ENCODE measurements at regions of chr11 and their contacts with region 1.

Region 1: GRCh38 chr11:47980245-47981049 is at the start of gene PTPRJ:
- DNase-seq: peak in 1 of 2 donors; percentile 43
- ATAC-seq: peak; percentile 67 to 72
- H3K4me3 ChIP-seq: peak within 1 kb of the TSS; percentile 67 to 93 (median 72)
- H3K27ac ChIP-seq: peak within 1 kb of the TSS; percentile 69 to 74 (median 72)
- H3K4me1 ChIP-seq: peaks cover 8 to 12% of the 10 kb centered on the region in 2 donors
- H3K27me3 ChIP-seq: peaks cover 0 to 3% (median 0%) of the 10 kb centered on the region in 3 donors
- CTCF ChIP-seq: no peak
- POLR2A ChIP-seq: peak; percentile 28 to 69
- total RNA-seq, gene PTPRJ: 5.4 to 9.0 (median 5.6) TPM

Region 2: DNA sequence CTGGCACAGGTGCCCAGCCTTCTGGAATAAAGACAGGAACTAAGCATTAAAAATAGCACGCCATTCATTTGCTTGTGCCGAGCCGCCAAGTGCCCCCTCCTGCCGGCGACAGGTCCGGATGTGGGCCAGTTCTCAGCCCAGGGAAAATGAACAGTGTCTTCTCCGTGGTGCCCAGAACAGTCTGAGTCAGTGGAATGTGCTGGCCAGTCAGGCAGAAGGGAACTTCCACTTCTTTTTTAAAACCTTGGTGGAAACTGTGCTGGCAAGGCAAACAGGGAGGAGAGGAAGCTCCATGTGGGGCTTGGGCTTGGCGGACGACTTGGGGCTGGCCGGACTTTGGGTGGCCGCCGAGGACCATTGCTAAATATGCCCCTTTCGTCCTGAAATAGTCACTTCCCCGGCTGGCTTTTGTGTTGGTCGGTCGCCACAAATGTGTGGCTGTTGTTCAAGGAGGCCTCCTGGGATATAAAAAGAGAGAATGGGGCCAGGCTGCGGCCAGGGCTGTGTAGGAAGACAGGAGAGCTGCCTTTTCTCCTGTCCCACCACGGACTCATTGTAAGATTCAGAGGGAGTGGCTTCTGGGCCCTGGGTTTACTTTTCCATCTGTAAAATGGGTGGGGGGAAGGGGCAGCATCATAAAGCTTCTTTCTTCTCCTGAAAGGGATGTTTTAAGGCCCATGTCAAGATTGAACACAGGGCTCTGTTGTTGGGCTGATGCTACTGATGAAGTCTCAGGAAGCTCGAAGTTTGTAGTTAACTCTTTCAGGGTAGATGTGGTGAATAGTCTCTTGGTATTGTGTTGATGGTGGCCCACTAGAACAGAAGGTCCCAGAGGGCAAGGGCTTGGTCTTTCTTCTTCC is 100.9 kb after region 1 on chr11:
- in situ Hi-C with region 1: no loop called
- intact Hi-C with region 1: loop called (anchors 2 kb)
- DNase-seq: peak; percentile 86 to 92
- ATAC-seq: peak; percentile 93 to 95
- H3K4me3 ChIP-seq: peak overlapping the region; percentile 29 to 37 (median 34)
- H3K27ac ChIP-seq: peak overlapping the region; percentile 84 to 93 (median 88)
- H3K4me1 ChIP-seq: peaks cover 10 to 27% of the 10 kb centered on the region in 2 donors
- H3K27me3 ChIP-seq: no peaks in the 10 kb centered on the region
- CTCF ChIP-seq: no peak
- POLR2A ChIP-seq: peak in 1 of 2 donors; percentile 23